Adrenal gland (tissue), 19 donors: ENCODE measurements at regions of chr13 and their contacts with region 1.

Region 1: DNA sequence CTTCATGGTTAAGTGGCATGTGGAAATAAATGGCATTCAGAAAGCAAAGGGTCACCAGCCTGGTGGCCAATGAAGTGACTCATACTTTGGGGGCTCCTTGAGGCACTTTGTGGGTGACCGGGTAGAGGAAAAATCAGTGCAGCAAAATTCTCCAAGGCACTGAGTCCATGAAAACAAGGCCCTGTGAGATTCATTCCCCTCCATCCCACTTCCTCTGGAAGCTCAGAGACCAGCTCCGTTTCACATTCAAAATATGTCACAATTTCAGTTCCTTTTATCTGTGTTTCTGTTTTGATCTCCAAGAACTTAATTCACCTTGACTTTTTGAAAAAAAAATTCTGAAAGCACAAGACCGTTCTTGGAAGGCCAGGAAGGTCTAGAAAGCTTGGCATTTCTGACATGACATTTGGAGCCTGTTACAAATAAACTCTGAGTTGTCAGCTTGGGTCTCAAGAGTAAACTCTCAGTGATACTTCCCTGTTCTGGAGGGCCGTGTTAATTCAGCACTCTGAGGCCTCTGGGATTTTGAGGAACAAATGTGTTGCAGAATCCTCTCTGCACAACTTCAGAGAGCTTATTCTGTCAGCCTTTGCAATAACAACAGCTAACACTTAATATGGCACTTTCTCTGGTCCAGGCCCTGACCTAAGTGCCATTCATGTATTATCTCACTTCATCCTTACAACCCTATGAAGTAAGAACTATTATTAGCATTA is 6.8 kb downstream of the CYSLTR2 start:
- DNase-seq: peak in 2 of 7 donors; percentile 24 to 42
- H3K4me3 ChIP-seq: no peak overlapping the region
- H3K27ac ChIP-seq: peak overlapping the region in 4 of 5 donors; percentile 35 to 79 (median 60)
- H3K4me1 ChIP-seq: peaks cover 27 to 35% of the 10 kb centered on the region in 2 donors
- H3K27me3 ChIP-seq: no peaks in the 10 kb centered on the region
- CTCF ChIP-seq: no peak
- POLR2A ChIP-seq: no peak

Region 2: GRCh38 chr13:48457578-48458242 is 202.8 kb before region 1 on chr13:
- intact Hi-C with region 1: no loop called
- DNase-seq: no peak
- H3K4me3 ChIP-seq: no peak overlapping the region
- H3K27ac ChIP-seq: no peak overlapping the region
- H3K4me1 ChIP-seq: no peaks in the 10 kb centered on the region
- H3K27me3 ChIP-seq: no peaks in the 10 kb centered on the region
- CTCF ChIP-seq: no peak
- POLR2A ChIP-seq: no peak

Region 3: GRCh38 chr13:48731957-48732569 is 71.5 kb after region 1 on chr13:
- intact Hi-C with region 1: loop called in 1 of 2 experiments (anchors 10 kb)
- DNase-seq: peak; percentile 45 to 70 (median 61)
- H3K4me3 ChIP-seq: peak overlapping the region in 1 of 4 donors; percentile 25
- H3K27ac ChIP-seq: peak overlapping the region in 1 of 5 donors; percentile 5
- H3K4me1 ChIP-seq: peaks cover 2 to 4% of the 10 kb centered on the region in 2 donors
- H3K27me3 ChIP-seq: no peaks in the 10 kb centered on the region
- CTCF ChIP-seq: peak; percentile 56 to 77 (median 67)
- POLR2A ChIP-seq: no peak